ENCODE measurements at regions of chr10 and their contacts with region 1.

Region 1: GRCh38 chr10:98309366-98310355 is 41.7 kb upstream of the LOXL4 start:
- DNase-seq: peak; percentile 72
- H3K4me3 ChIP-seq: no peak overlapping the region
- H3K27ac ChIP-seq: no peak overlapping the region
- H3K4me1 ChIP-seq: no peaks in the 10 kb centered on the region
- H3K27me3 ChIP-seq: no peaks in the 10 kb centered on the region
- CTCF ChIP-seq: peak; percentile 81

Region 2: DNA sequence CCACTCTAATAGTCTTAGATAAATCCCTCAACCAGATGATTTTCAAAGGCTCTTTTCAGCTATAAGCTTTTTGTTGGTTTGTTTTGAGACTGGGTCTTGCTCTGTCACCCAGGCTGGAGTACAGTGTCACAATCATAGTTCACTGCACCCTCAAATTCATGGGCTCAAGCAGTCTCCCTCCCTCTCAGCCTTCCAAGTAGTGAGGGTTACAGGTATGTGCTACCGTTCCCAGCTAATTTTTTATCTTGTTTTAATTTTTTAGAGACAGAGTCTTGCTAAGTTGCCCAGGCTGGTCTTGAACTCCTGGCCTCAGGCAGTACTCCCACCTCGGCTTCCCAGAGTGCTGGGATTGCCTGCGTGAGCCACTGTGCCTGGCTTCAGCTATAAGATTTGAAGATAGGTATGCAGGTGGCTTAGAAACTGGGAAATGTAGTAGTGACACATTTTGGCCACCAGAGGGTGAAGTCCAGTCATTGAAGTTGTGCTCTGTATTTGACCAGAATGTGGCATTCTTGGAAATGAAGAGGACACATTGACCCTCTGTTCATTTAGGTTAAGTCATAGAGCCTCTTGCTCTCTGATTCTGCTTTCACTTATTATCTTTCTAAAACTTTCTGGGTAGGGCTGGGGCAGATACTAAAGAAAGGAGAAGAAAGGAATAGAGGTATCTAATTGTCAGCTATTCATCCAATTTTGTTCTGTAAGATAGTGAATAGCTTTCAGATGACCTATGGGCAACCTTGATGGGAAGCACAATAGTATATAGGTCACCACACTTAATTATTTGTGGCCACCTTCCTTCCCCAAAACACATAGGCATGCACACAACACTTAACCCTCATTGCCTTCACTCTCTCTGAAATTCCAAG is 139.2 kb before region 1 on chr10:
- CTCF ChIA-PET with region 1: interaction called, 16 read pairs
- POLR2A ChIA-PET with region 1: interaction called, 3 read pairs
- intact Hi-C with region 1: loop called (anchors 2 kb)
- DNase-seq: peak; percentile 51
- H3K4me3 ChIP-seq: no peak overlapping the region
- H3K27ac ChIP-seq: no peak overlapping the region
- H3K4me1 ChIP-seq: peaks cover 5% of the 10 kb centered on the region
- H3K27me3 ChIP-seq: no peaks in the 10 kb centered on the region
- CTCF ChIP-seq: peak; percentile 77

Region 3: GRCh38 chr10:98242823-98243222 is 66.8 kb before region 1 on chr10:
- CTCF ChIA-PET with region 1: no interaction called
- POLR2A ChIA-PET with region 1: interaction called, 3 read pairs
- intact Hi-C with region 1: loop called (anchors 2 kb)
- DNase-seq: peak; percentile 30
- H3K4me3 ChIP-seq: no peak overlapping the region
- H3K27ac ChIP-seq: no peak overlapping the region
- H3K4me1 ChIP-seq: no peaks in the 10 kb centered on the region
- H3K27me3 ChIP-seq: no peaks in the 10 kb centered on the region
- CTCF ChIP-seq: peak; percentile 47; the same call in 1 of the 2 replicates

Region 4: DNA sequence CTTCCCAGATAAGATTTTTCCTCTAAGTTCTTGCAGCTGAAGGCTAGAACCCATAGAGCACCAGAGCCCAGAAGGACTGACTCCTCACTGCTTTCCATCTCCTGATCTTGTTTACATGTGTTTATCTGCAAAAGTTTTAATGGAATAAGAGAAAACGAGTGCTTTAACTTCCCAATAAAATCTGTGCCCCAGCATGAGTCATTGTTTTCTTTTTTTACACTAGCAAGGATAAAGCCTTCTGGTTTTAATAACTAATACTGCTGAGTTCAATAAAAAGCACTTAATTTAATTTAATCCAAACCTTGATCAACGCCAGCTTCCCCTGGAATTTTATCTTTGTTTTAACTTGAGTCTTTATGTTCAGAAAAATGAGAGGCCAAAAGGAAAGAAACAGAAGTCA is 698.4 kb after region 1 on chr10:
- CTCF ChIA-PET with region 1: no interaction called
- POLR2A ChIA-PET with region 1: no interaction called
- intact Hi-C with region 1: no loop called
- DNase-seq: no peak
- H3K4me3 ChIP-seq: no peak overlapping the region
- H3K27ac ChIP-seq: no peak overlapping the region
- H3K4me1 ChIP-seq: no peaks in the 10 kb centered on the region
- H3K27me3 ChIP-seq: no peaks in the 10 kb centered on the region
- CTCF ChIP-seq: no peak

Measured in A673 (cell line).